A549 (cell line): ENCODE measurements at regions of chr15 and their contacts with region 1.

Region 1: DNA sequence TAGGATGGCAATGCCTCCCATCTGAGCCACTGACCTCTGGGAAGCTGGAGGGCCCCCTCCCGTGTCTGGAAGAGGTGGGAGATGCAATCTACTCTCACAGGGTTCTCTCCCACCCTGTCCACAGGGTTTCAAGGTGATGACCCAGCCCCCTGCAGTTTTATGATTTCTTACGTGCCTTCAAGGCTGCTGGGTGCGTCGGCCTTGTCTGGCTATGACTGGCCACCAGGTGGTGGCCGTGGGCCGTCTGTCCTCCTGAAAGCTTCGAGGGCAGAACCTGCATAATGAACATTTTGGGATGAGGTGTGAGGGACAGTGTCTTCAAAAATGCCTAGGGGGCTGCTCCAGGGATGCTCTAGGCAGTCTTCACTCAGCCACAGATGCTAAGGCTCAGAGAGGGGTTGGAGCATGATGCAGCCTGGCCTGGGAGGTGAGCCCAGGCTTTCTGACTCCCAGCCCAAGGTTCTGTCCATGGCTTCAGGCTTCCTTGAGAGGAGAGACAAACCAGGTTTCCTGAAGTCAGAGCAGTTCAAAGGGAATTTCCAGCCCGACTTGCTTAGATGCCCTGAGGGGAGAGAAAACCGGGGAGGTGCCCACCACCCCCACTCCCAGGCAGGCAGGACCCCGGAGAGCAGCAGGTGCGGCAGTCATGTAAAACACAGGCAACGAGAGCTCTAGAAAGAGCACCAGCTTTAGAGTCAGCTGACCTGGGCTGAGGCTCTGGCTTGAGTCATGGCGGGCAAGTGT is 18.7 kb downstream of the ISG20 start:
- DNase-seq: peak; percentile 62 to 78
- ATAC-seq: peak; percentile 75 to 88
- H3K4me3 ChIP-seq: no peak overlapping the region
- H3K27ac ChIP-seq: no peak overlapping the region
- H3K4me1 ChIP-seq: no peaks in the 10 kb centered on the region
- CTCF ChIP-seq: peak; percentile 93
- EP300 ChIP-seq: no peak
- POLR2A ChIP-seq: no peak
- RAD21 ChIP-seq: peak; percentile 94 to 97

Region 2: DNA sequence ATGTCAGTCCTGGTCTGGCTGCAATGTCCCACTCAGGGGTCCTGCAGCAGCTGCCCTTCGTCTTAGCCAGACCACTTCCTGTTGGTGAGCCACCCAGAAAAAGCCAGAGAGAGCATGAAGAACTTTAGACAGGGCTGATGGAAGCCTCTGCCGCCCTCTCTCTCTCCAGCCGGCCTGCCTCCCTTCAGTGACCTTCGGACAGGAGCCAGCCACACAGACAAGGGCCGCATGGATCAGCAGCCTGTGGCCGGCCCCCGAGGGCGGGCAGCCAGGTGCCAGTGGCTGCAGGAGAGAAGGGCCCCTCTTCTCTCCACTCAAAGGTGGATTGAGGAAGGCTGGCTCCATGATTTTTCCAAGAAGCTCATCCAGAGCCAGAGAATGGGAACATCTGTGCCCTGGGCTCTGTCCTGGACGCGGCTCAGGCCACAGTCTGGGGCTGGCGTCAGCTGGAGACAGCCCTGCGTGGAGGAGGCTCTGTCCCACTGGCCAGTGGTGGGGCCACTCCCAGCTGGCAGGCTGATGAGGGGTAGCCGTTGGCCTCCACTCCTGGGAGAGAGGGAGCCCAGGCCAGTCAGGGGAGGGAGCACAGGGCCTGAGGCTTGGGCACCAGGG is 24.2 kb after region 1 on chr15:
- CTCF ChIA-PET with region 1: interaction called, 45 read pairs
- POLR2A ChIA-PET with region 1: no interaction called
- DNase-seq: no peak
- ATAC-seq: peak in 1 of 2 experiments; percentile 57; a peak in 3 of 6 replicates
- H3K4me3 ChIP-seq: no peak overlapping the region
- H3K27ac ChIP-seq: no peak overlapping the region
- H3K4me1 ChIP-seq: no peaks in the 10 kb centered on the region
- CTCF ChIP-seq: no peak
- EP300 ChIP-seq: no peak
- POLR2A ChIP-seq: no peak
- RAD21 ChIP-seq: no peak

Region 3: DNA sequence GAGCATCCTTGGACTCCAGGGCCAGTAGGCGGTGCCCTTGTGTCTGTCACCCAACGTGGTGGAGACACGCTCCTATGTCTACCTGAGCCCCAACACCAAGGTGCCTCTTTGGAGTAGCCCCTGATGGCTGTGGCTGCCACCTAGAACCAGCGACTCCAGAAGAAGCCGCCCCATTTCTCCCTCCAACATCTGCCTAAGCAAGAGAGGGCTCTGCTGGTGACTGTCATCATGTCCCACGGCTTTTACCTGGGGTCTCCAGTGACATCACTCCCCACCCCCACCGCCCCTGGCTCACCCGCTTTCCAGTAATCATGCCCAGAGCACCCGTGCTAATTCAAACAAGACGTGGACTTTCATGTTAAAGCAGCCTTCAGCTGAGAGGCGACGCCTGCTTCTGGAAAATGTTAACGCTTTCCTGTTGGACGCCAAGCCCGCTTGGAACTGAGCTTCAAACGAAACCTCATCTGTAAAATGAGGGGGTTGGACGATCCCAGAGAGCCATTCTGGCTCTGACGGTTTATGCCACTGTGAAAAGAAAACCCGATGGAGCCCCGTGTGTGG is 38.3 kb after region 1 on chr15:
- CTCF ChIA-PET with region 1: interaction called, 27 read pairs
- POLR2A ChIA-PET with region 1: no interaction called
- DNase-seq: no peak
- ATAC-seq: no peak
- H3K4me3 ChIP-seq: no peak overlapping the region
- H3K27ac ChIP-seq: no peak overlapping the region
- H3K4me1 ChIP-seq: no peaks in the 10 kb centered on the region
- CTCF ChIP-seq: no peak
- EP300 ChIP-seq: no peak
- POLR2A ChIP-seq: no peak
- RAD21 ChIP-seq: no peak

Region 4: GRCh38 chr15:88800026-88800425 is 142.5 kb after region 1 on chr15:
- CTCF ChIA-PET with region 1: interaction called, 13 read pairs
- POLR2A ChIA-PET with region 1: interaction called, 3 read pairs
- DNase-seq: peak in 1 of 2 experiments; percentile 36
- ATAC-seq: peak; percentile 34 to 45; a peak in 2 of 6 replicates
- H3K4me3 ChIP-seq: no peak overlapping the region
- H3K27ac ChIP-seq: no peak overlapping the region
- H3K4me1 ChIP-seq: peaks cover 7% of the 10 kb centered on the region; the same call in 1 of the 3 replicates
- CTCF ChIP-seq: no peak
- EP300 ChIP-seq: no peak
- POLR2A ChIP-seq: no peak
- RAD21 ChIP-seq: no peak

Region 5: DNA sequence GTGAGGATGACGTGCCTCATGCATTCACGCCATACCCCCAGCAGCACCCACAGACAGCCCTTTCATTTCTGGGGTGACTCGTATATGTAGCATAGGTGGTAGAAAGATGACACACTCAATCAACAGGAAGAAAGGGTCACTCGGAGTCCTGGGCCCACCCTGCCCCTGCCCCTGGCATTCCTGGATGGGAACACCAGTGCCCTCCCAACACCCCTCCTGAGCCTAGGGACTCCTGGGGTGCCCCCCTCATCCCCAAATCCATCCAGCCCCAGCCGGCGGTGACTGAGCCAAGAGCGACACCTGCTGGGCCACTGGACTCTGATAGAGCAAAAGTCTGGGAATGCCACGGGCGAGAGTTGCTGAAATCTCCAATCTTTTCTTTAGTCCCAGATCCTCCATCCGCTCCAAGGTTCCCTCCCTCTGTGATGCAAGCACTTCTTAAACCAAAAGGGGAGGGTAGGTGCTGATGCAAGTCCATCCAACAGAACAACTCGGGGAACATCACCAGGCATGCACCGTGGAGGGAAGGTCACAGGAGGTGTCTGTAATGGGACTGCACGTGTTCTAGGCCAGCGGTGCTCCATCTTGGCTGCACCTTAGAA is 176.8 kb after region 1 on chr15:
- CTCF ChIA-PET with region 1: interaction called, 297 read pairs
- POLR2A ChIA-PET with region 1: interaction called, 3 read pairs
- DNase-seq: peak; percentile 44 to 57
- ATAC-seq: peak; percentile 61 to 87
- H3K4me3 ChIP-seq: no peak overlapping the region
- H3K27ac ChIP-seq: no peak overlapping the region
- H3K4me1 ChIP-seq: no peaks in the 10 kb centered on the region; the same call in 2 of the 3 replicates
- CTCF ChIP-seq: peak; percentile 84
- EP300 ChIP-seq: no peak
- POLR2A ChIP-seq: no peak
- RAD21 ChIP-seq: peak; percentile 95 to 96

Region 6: GRCh38 chr15:88865498-88866099 is 208.1 kb after region 1 on chr15:
- CTCF ChIA-PET with region 1: interaction called, 35 read pairs
- POLR2A ChIA-PET with region 1: no interaction called
- DNase-seq: no peak
- ATAC-seq: no peak
- H3K4me3 ChIP-seq: no peak overlapping the region
- H3K27ac ChIP-seq: no peak overlapping the region
- H3K4me1 ChIP-seq: no peaks in the 10 kb centered on the region
- CTCF ChIP-seq: no peak
- EP300 ChIP-seq: no peak
- POLR2A ChIP-seq: no peak
- RAD21 ChIP-seq: no peak

Region 7: DNA sequence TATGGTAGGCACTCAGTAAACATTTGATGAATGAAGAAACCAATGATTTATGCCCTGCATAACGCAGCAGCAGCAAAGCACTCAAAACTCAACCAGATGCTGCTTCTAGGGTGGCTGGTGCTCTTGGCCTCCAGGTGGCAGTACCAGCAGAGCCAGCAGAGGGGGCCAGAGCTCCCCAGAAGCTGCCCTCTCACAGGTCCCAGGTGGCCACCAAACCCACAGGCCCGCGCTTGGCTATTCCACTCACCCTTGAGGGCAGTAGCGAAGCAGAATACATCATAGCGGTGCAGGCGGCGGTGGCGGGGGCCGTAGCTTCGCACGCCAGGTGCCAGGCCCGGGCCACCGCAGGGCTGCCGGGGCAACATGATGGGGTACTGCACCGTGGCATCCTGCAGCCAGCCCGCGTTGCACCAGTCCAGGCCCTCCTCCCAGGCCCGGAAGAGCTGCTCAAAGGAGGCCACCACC is 221.3 kb after region 1 on chr15:
- CTCF ChIA-PET with region 1: interaction called, 79 read pairs
- POLR2A ChIA-PET with region 1: no interaction called
- DNase-seq: peak; percentile 68 to 87
- ATAC-seq: peak; percentile 91 to 95
- H3K4me3 ChIP-seq: no peak overlapping the region
- H3K27ac ChIP-seq: no peak overlapping the region
- H3K4me1 ChIP-seq: no peaks in the 10 kb centered on the region
- CTCF ChIP-seq: peak; percentile 78
- EP300 ChIP-seq: no peak
- POLR2A ChIP-seq: no peak
- RAD21 ChIP-seq: peak; percentile 70 to 82